Activated CD8-positive, alpha-beta T cell treated with anti-CD3 and anti-CD28 coated beads for 36 hours (primary cell): ENCODE measurements at regions of chr22 and their contacts with region 1.

Region 1: GRCh38 chr22:39532215-39533071 is at the start of gene RPS19BP1:
- DNase-seq: peak; percentile 100
- ATAC-seq: peak; percentile 90
- H3K4me3 Mint-ChIP-seq: peak within 1 kb of the TSS; percentile 86
- H3K27ac Mint-ChIP-seq: peak within 1 kb of the TSS; percentile 93
- H3K4me1 Mint-ChIP-seq: peaks cover 49% of the 10 kb centered on the region
- H3K27me3 Mint-ChIP-seq: no peaks in the 10 kb centered on the region
- CTCF ChIP-seq: no peak
- total RNA-seq, gene RPS19BP1: 68.5 to 71.7 TPM

Region 2: GRCh38 chr22:39496131-39496838 is 36.2 kb before region 1 on chr22:
- CTCF ChIA-PET with region 1: interaction called, 323 read pairs
- POLR2A ChIA-PET with region 1: interaction called, 12 read pairs
- intact Hi-C with region 1: loop called (anchors 5 kb)
- DNase-seq: peak; percentile 80
- ATAC-seq: peak; percentile 78
- H3K4me3 Mint-ChIP-seq: no peak overlapping the region
- H3K27ac Mint-ChIP-seq: no peak overlapping the region
- H3K4me1 Mint-ChIP-seq: peaks cover 3% of the 10 kb centered on the region
- H3K27me3 Mint-ChIP-seq: no peaks in the 10 kb centered on the region
- CTCF ChIP-seq: peak; percentile 82

Region 3: DNA sequence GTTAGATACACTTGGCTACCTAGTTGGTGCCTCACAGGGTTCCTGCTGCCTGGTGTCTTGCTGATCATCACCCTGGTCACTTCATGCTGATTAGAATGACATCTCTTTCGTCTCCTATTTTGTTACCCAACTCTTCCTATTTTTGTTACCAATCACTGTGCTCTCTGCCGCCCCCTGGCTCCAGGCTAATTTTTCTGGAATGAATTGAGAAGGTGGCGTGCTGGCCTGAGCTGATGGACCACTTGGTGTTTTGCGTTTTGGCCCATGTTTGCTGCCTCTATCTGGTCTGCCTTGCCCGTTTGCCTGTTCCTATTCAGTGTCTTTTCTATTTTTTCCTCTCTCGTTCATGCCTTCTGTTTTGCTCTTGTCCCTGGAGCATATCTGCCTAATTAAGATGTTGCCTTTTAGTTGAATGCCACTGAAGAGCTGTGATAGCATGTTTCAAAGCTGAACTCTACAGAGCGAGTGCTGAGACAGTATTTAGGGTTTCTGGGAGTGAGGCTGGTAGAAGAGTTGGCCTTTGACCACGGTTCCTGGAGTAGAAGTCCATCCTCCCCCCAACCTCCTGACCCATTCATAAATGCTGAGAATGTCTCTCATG is 18.0 kb before region 1 on chr22:
- CTCF ChIA-PET with region 1: interaction called, 40 read pairs
- POLR2A ChIA-PET with region 1: interaction called, 234 read pairs
- intact Hi-C with region 1: no loop called
- DNase-seq: peak; percentile 75
- ATAC-seq: no peak
- H3K4me3 Mint-ChIP-seq: no peak overlapping the region
- H3K27ac Mint-ChIP-seq: peak overlapping the region; percentile 19
- H3K4me1 Mint-ChIP-seq: peaks cover 39% of the 10 kb centered on the region
- H3K27me3 Mint-ChIP-seq: no peaks in the 10 kb centered on the region
- CTCF ChIP-seq: peak; percentile 72

Region 4: DNA sequence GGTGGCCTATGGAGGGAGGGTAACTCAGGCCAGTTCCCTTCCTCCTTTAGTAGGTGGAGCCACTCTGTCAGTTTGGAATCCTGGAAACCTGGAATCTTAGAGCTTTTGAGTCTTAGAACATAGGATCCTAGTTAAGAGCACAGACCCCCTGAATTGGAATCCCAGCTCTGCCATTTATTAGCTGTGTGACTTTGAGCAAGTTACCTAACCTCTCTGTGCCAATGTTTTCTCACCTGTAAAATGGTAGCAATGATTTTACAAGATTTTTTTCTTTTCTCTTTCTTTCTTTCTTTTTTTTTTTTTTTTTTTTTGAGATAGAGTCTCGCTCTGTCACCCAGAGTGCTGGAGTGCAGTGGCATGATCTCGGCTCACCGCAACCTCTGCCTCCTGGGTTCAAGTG is 21.0 kb after region 1 on chr22:
- CTCF ChIA-PET with region 1: interaction called, 18 read pairs
- POLR2A ChIA-PET with region 1: no interaction called
- intact Hi-C with region 1: no loop called
- DNase-seq: no peak
- ATAC-seq: no peak
- H3K4me3 Mint-ChIP-seq: no peak overlapping the region
- H3K27ac Mint-ChIP-seq: no peak overlapping the region
- H3K4me1 Mint-ChIP-seq: peaks cover 2% of the 10 kb centered on the region
- H3K27me3 Mint-ChIP-seq: peaks cover 25% of the 10 kb centered on the region
- CTCF ChIP-seq: no peak

Region 5: GRCh38 chr22:39643311-39644083 is 111.1 kb after region 1 on chr22:
- CTCF ChIA-PET with region 1: no interaction called
- POLR2A ChIA-PET with region 1: no interaction called
- intact Hi-C with region 1: no loop called
- DNase-seq: no peak
- ATAC-seq: no peak
- H3K4me3 Mint-ChIP-seq: no peak overlapping the region
- H3K27ac Mint-ChIP-seq: no peak overlapping the region
- H3K4me1 Mint-ChIP-seq: no peaks in the 10 kb centered on the region
- H3K27me3 Mint-ChIP-seq: peaks cover 2% of the 10 kb centered on the region
- CTCF ChIP-seq: no peak

Region 6: GRCh38 chr22:39917776-39918495 is 385.5 kb after region 1 on chr22:
- CTCF ChIA-PET with region 1: interaction called, 3 read pairs
- POLR2A ChIA-PET with region 1: interaction called, 3 read pairs
- intact Hi-C with region 1: loop called (anchors 5 kb)
- DNase-seq: no peak
- ATAC-seq: no peak
- H3K4me3 Mint-ChIP-seq: peak overlapping the region; percentile 80
- H3K27ac Mint-ChIP-seq: peak overlapping the region; percentile 92
- H3K4me1 Mint-ChIP-seq: peaks cover 79% of the 10 kb centered on the region
- H3K27me3 Mint-ChIP-seq: no peaks in the 10 kb centered on the region
- CTCF ChIP-seq: no peak

Region 7: DNA sequence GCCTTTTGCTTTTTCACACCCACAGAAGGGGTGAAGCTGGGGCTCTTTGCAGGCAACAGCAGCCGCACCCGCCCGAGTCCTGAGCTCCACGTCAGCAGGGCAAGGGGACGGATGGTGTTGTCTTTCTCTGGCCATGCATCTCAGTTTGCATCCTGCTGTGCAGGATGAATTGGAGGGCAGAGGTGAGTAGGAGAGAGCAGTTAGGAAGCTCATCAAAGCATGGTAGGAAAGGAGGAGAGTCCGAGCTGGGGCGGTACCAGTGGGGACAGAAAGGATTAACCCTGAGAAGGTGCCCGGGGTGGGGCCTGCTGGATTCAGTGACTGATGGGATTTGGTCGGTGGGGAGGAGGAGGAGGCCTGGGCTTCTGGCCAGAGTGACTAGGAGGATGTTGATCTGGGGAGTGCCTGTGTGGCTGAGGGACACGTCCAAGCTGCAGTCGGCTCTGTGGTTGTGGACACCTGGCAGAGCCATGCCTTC is 476.9 kb after region 1 on chr22:
- CTCF ChIA-PET with region 1: interaction called, 11 read pairs
- POLR2A ChIA-PET with region 1: no interaction called
- intact Hi-C with region 1: no loop called
- DNase-seq: no peak
- ATAC-seq: peak; percentile 26
- H3K4me3 Mint-ChIP-seq: peak overlapping the region; percentile 39
- H3K27ac Mint-ChIP-seq: peak overlapping the region; percentile 85
- H3K4me1 Mint-ChIP-seq: peaks cover 20% of the 10 kb centered on the region
- H3K27me3 Mint-ChIP-seq: peaks cover 4% of the 10 kb centered on the region
- CTCF ChIP-seq: no peak

Region 8: DNA sequence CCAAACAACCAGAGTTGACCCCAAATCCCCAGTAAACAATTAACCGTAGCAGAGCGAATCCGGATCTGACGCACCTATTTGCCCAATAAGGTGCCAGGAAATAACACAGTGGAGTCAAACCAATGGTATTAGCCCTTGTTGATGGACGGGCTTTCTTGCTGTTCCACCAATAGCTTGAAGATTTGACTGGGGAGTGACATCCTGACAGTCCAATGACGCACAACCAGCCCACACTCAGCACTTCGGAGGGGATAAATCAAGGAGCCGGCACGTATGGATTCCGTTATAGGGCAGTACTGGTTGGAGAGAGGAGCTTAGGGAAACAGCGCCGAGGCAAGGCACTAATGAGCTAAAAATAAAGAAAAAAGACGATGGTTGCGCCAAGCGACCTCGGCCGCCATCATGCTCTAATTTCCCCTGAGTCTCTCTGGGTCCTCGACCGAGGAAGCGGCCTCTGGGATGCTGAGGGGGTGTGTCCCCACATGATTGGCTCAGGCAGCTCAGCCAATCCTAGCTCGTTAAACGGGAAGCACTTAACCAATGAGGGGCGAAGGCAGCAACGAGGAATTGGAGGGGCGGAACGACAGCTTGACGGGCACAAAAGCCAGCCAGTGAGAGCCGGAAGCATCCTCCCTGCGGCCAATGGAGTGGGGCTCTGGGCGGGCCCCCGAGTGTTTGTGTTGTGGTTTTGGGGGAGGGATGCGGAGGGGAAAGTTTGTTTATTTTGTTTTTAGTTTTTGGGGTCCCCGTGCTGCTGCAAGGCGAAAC is 511.8 kb after region 1 on chr22:
- CTCF ChIA-PET with region 1: interaction called, 21 read pairs
- POLR2A ChIA-PET with region 1: interaction called, 8 read pairs
- intact Hi-C with region 1: no loop called
- DNase-seq: peak; percentile 99
- ATAC-seq: peak; percentile 88
- H3K4me3 Mint-ChIP-seq: peak overlapping the region; percentile 87
- H3K27ac Mint-ChIP-seq: peak overlapping the region; percentile 99
- H3K4me1 Mint-ChIP-seq: peaks cover 26% of the 10 kb centered on the region
- H3K27me3 Mint-ChIP-seq: no peaks in the 10 kb centered on the region
- CTCF ChIP-seq: no peak